ENCODE measurements at regions of chr6 and their contacts with region 1.

Region 1: GRCh38 chr6:119333707-119334295 is 15.8 kb downstream of the MAN1A1 start:
- DNase-seq: peak in 6 of 9 donors; percentile 24 to 56 (median 42)
- ATAC-seq: peak; percentile 78
- H3K4me3 ChIP-seq: no peak overlapping the region
- H3K4me3 Mint-ChIP-seq: no peak overlapping the region
- H3K27ac ChIP-seq: no peak overlapping the region
- H3K27ac Mint-ChIP-seq: no peak overlapping the region
- H3K4me1 ChIP-seq: no peaks in the 10 kb centered on the region
- H3K4me1 Mint-ChIP-seq: peaks cover 0 to 53% (median 11%) of the 10 kb centered on the region in 7 donors
- H3K27me3 ChIP-seq: no peaks in the 10 kb centered on the region
- H3K27me3 Mint-ChIP-seq: no peaks in the 10 kb centered on the region

Region 2: DNA sequence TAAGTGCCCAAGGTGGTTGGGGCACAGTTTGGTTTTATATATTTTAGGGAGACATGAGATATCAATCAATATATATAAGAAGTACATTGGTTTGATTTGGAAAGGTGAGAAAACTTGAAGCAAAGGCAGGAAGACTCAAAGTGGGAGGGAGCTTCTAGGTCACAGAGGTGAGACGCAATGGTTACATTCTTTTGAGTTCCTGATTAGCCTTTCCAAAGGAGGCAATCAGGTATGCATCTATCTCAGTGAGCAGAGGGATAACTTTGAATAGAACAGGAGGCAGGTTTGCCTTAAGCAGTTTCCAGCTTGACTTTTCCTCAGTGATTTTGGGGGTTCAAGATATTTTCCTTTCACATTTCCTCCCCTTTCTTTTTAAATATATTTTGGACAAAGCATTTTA is 1484.7 kb before region 1 on chr6:
- CTCF ChIA-PET with region 1: no interaction called
- POLR2A ChIA-PET with region 1: no interaction called
- intact Hi-C with region 1: no loop called
- DNase-seq: no peak
- ATAC-seq: no peak
- H3K4me3 ChIP-seq: no peak overlapping the region
- H3K4me3 Mint-ChIP-seq: no peak overlapping the region
- H3K27ac ChIP-seq: no peak overlapping the region
- H3K27ac Mint-ChIP-seq: no peak overlapping the region
- H3K4me1 ChIP-seq: no peaks in the 10 kb centered on the region
- H3K4me1 Mint-ChIP-seq: no peaks in the 10 kb centered on the region
- H3K27me3 ChIP-seq: no peaks in the 10 kb centered on the region
- H3K27me3 Mint-ChIP-seq: peaks cover 0 to 3% (median 0%) of the 10 kb centered on the region in 5 donors

Region 3: GRCh38 chr6:119079283-119079809 is 254.5 kb before region 1 on chr6:
- CTCF ChIA-PET with region 1: no interaction called
- POLR2A ChIA-PET with region 1: no interaction called
- intact Hi-C with region 1: no loop called
- DNase-seq: no peak
- ATAC-seq: no peak
- H3K4me3 ChIP-seq: peak overlapping the region; percentile 77
- H3K4me3 Mint-ChIP-seq: peak overlapping the region; percentile 75 to 97 (median 94)
- H3K27ac ChIP-seq: peak overlapping the region; percentile 74
- H3K27ac Mint-ChIP-seq: peak overlapping the region; percentile 66 to 97 (median 95)
- H3K4me1 ChIP-seq: peaks cover 5 to 25% of the 10 kb centered on the region in 2 donors
- H3K4me1 Mint-ChIP-seq: peaks cover 11 to 43% (median 32%) of the 10 kb centered on the region in 7 donors
- H3K27me3 ChIP-seq: no peaks in the 10 kb centered on the region
- H3K27me3 Mint-ChIP-seq: peaks cover 0 to 9% (median 0%) of the 10 kb centered on the region in 5 donors

Region 4: GRCh38 chr6:119267126-119267905 is 66.5 kb before region 1 on chr6:
- CTCF ChIA-PET with region 1: no interaction called
- POLR2A ChIA-PET with region 1: no interaction called
- intact Hi-C with region 1: no loop called
- DNase-seq: peak in 2 of 9 donors; percentile 6 to 18
- ATAC-seq: peak; percentile 68
- H3K4me3 ChIP-seq: no peak overlapping the region
- H3K4me3 Mint-ChIP-seq: peak overlapping the region in 4 of 10 donors; percentile 3 to 29 (median 7)
- H3K27ac ChIP-seq: no peak overlapping the region
- H3K27ac Mint-ChIP-seq: peak overlapping the region in 4 of 9 donors; percentile 2 to 20 (median 4)
- H3K4me1 ChIP-seq: peaks cover 0 to 11% of the 10 kb centered on the region in 2 donors
- H3K4me1 Mint-ChIP-seq: peaks cover 8 to 30% (median 26%) of the 10 kb centered on the region in 7 donors
- H3K27me3 ChIP-seq: no peaks in the 10 kb centered on the region
- H3K27me3 Mint-ChIP-seq: no peaks in the 10 kb centered on the region

Region 5: GRCh38 chr6:119313937-119314884 is 19.6 kb before region 1 on chr6:
- CTCF ChIA-PET with region 1: no interaction called
- POLR2A ChIA-PET with region 1: no interaction called
- intact Hi-C with region 1: loop called in 1 of 2 experiments (anchors 2 kb)
- DNase-seq: peak in 7 of 9 donors; percentile 17 to 49 (median 38)
- ATAC-seq: peak; percentile 72
- H3K4me3 ChIP-seq: peak overlapping the region; percentile 22
- H3K4me3 Mint-ChIP-seq: peak overlapping the region; percentile 57 to 83 (median 73)
- H3K27ac ChIP-seq: peak overlapping the region; percentile 40
- H3K27ac Mint-ChIP-seq: peak overlapping the region; percentile 68 to 97 (median 85)
- H3K4me1 ChIP-seq: peaks cover 27 to 43% of the 10 kb centered on the region in 2 donors
- H3K4me1 Mint-ChIP-seq: peaks cover 27 to 69% (median 39%) of the 10 kb centered on the region in 7 donors
- H3K27me3 ChIP-seq: no peaks in the 10 kb centered on the region
- H3K27me3 Mint-ChIP-seq: no peaks in the 10 kb centered on the region

Region 6: DNA sequence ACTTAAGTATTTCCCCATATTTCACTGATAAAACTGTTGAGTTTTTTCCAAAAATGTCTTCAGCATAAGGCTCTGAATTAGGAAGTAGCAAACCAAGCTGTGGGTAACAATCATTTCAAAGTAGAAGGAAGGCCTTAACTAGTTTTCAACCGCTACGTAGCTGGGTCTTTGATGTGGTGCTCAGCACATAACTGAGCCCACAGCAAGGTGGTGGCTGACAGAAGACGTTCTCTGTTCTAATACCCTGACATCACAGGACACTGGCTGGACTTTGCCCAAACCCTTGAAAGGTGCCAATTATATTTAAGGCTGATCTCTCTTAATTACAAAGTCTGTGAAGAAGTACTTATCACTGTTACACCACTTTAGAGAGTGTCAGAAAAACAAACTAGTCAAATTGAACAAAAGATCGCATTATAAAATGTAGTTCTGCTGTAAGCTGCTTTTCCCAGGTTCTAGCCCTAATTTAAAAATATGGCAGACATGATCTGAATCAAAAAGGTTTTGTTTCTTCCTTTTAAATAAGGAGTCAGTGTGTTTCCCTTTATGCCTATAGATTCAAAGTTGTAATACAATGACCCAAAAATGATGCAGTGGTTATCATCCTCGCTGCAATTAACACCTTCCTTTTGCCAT is 11.0 kb before region 1 on chr6:
- CTCF ChIA-PET with region 1: interaction called, 4 read pairs
- POLR2A ChIA-PET with region 1: no interaction called
- intact Hi-C with region 1: loop called in 1 of 2 experiments (anchors 2 kb)
- DNase-seq: peak in 7 of 9 donors; percentile 37 to 68 (median 53)
- ATAC-seq: peak; percentile 90
- H3K4me3 ChIP-seq: no peak overlapping the region
- H3K4me3 Mint-ChIP-seq: peak overlapping the region in 8 of 10 donors; percentile 3 to 70 (median 44)
- H3K27ac ChIP-seq: no peak overlapping the region
- H3K27ac Mint-ChIP-seq: peak overlapping the region in 7 of 9 donors; percentile 16 to 78 (median 31)
- H3K4me1 ChIP-seq: peaks cover 12 to 17% of the 10 kb centered on the region in 2 donors
- H3K4me1 Mint-ChIP-seq: peaks cover 16 to 37% (median 18%) of the 10 kb centered on the region in 7 donors
- H3K27me3 ChIP-seq: no peaks in the 10 kb centered on the region
- H3K27me3 Mint-ChIP-seq: no peaks in the 10 kb centered on the region

Region 7: DNA sequence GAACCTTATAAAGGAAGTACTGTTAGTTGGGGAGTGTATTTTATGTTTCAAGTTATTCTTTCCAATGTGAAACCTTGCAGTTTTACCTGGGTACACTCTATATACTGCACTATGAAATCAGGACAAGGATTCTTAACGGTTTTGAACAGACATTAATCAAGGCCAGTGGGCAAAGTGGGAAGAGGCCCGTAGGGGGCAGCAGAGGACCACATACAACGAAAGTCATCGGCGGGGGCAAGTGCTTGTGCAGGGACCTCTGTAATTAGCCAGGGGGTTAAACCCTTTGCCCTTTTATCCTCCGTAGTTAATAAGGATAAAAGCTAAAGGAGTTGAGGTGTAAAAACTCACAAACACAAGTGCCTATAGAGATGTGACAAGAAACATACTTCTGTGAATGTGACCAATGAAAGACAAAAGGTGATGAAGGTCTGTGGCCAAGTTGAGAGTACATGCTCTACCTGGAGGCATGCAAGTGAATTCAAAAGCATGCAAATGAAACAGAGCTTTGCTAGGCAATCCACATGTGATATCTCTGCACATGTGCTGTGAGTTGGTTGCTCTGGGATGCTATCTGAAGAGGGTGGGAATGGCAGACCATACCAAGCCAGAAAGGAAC is 408.5 kb after region 1 on chr6:
- CTCF ChIA-PET with region 1: no interaction called
- POLR2A ChIA-PET with region 1: no interaction called
- intact Hi-C with region 1: loop called in 1 of 2 experiments (anchors 1 kb)
- DNase-seq: peak; percentile 2 to 49 (median 22)
- ATAC-seq: peak; percentile 76
- H3K4me3 ChIP-seq: no peak overlapping the region
- H3K4me3 Mint-ChIP-seq: no peak overlapping the region
- H3K27ac ChIP-seq: no peak overlapping the region
- H3K27ac Mint-ChIP-seq: no peak overlapping the region
- H3K4me1 ChIP-seq: no peaks in the 10 kb centered on the region
- H3K4me1 Mint-ChIP-seq: peaks cover 0 to 6% (median 0%) of the 10 kb centered on the region in 7 donors
- H3K27me3 ChIP-seq: no peaks in the 10 kb centered on the region
- H3K27me3 Mint-ChIP-seq: peaks cover 0 to 27% (median 10%) of the 10 kb centered on the region in 5 donors

Region 8: GRCh38 chr6:119830494-119831295 is 496.9 kb after region 1 on chr6:
- CTCF ChIA-PET with region 1: no interaction called
- POLR2A ChIA-PET with region 1: no interaction called
- intact Hi-C with region 1: no loop called
- DNase-seq: no peak
- ATAC-seq: no peak
- H3K4me3 ChIP-seq: no peak overlapping the region
- H3K4me3 Mint-ChIP-seq: no peak overlapping the region
- H3K27ac ChIP-seq: no peak overlapping the region
- H3K27ac Mint-ChIP-seq: no peak overlapping the region
- H3K4me1 ChIP-seq: no peaks in the 10 kb centered on the region
- H3K4me1 Mint-ChIP-seq: peaks cover 0 to 2% (median 0%) of the 10 kb centered on the region in 7 donors
- H3K27me3 ChIP-seq: no peaks in the 10 kb centered on the region
- H3K27me3 Mint-ChIP-seq: peaks cover 6 to 21% (median 9%) of the 10 kb centered on the region in 5 donors

Region 9: DNA sequence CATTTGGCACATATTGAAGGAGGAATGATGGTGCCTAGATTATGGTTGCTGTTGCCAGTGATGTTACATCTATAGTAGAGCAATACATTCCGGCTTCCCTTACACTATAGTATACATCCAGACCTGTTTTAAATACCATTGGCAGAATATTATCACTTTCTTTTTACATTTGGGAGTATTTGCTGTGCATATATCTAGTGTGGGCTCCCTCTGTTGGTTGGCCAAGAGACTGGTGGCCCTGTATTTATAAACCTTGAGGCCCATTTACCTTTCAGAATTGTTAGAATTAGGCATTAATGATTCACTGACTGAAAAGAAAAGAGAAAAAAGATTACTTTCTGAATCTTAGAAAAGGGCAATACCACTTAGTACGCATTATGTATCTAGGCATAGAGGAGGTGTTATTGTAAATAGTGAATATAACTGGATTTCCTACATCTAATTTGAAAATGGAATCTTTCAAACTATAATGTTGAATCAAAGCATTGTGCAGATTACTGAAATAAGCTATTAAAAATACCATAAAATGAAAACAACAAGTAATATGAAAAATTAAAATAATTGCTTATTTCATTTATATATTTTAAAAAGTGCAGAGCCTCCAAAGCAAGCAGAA is 644.6 kb after region 1 on chr6:
- CTCF ChIA-PET with region 1: no interaction called
- POLR2A ChIA-PET with region 1: no interaction called
- intact Hi-C with region 1: loop called (anchors 1 kb)
- DNase-seq: no peak
- ATAC-seq: no peak
- H3K4me3 ChIP-seq: no peak overlapping the region
- H3K4me3 Mint-ChIP-seq: no peak overlapping the region
- H3K27ac ChIP-seq: no peak overlapping the region
- H3K27ac Mint-ChIP-seq: no peak overlapping the region
- H3K4me1 ChIP-seq: no peaks in the 10 kb centered on the region
- H3K4me1 Mint-ChIP-seq: peaks cover 0 to 4% (median 0%) of the 10 kb centered on the region in 7 donors
- H3K27me3 ChIP-seq: no peaks in the 10 kb centered on the region
- H3K27me3 Mint-ChIP-seq: no peaks in the 10 kb centered on the region

Region 10: GRCh38 chr6:120056085-120056484 is 722.3 kb after region 1 on chr6:
- CTCF ChIA-PET with region 1: no interaction called
- POLR2A ChIA-PET with region 1: no interaction called
- intact Hi-C with region 1: loop called in 1 of 2 experiments (anchors 1 kb)
- DNase-seq: no peak
- ATAC-seq: no peak
- H3K4me3 ChIP-seq: no peak overlapping the region
- H3K4me3 Mint-ChIP-seq: no peak overlapping the region
- H3K27ac ChIP-seq: no peak overlapping the region
- H3K27ac Mint-ChIP-seq: no peak overlapping the region
- H3K4me1 ChIP-seq: no peaks in the 10 kb centered on the region
- H3K4me1 Mint-ChIP-seq: no peaks in the 10 kb centered on the region
- H3K27me3 ChIP-seq: no peaks in the 10 kb centered on the region
- H3K27me3 Mint-ChIP-seq: peaks cover 0 to 5% (median 0%) of the 10 kb centered on the region in 5 donors

Region 11: DNA sequence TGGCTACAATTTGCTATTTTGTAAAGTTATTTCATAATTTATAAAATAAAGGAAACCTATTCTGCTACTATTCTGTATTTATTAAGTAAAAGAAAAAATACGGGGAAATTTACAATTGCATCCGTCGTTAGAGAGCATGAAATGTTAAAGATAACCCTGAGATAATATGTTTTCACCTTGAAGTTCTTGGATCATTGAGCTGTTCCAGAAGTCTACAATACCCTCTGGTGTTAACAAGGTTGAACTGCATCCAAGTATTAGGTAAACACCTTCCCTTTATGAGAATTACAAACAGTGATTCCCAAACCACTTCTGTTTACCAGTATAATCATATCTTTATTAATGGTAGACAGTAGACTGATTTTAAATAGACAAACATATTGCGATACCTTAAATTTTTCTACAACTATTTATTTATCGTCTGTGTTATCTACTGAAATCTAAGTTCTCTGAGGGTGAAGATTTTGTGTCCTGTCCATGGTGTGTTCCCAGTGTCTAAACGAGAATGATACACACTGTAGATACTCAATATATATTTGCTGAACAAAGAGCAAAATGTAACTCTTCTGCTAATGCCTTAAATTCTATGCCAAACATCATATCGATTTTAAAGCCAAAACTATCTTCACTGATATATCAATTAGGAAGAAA is 1972.3 kb after region 1 on chr6:
- CTCF ChIA-PET with region 1: interaction called, 8 read pairs
- POLR2A ChIA-PET with region 1: no interaction called
- intact Hi-C with region 1: loop called in 1 of 2 experiments (anchors 1 kb)
- DNase-seq: peak in 5 of 9 donors; percentile 2 to 14 (median 6)
- ATAC-seq: peak; percentile 62
- H3K4me3 ChIP-seq: no peak overlapping the region
- H3K4me3 Mint-ChIP-seq: no peak overlapping the region
- H3K27ac ChIP-seq: no peak overlapping the region
- H3K27ac Mint-ChIP-seq: peak overlapping the region in 1 of 9 donors; percentile 54
- H3K4me1 ChIP-seq: no peaks in the 10 kb centered on the region
- H3K4me1 Mint-ChIP-seq: peaks cover 0 to 7% (median 0%) of the 10 kb centered on the region in 7 donors
- H3K27me3 ChIP-seq: no peaks in the 10 kb centered on the region
- H3K27me3 Mint-ChIP-seq: no peaks in the 10 kb centered on the region